GM10248 (cell line): ENCODE measurements at regions of chr15 and their contacts with region 1.

Region 1: DNA sequence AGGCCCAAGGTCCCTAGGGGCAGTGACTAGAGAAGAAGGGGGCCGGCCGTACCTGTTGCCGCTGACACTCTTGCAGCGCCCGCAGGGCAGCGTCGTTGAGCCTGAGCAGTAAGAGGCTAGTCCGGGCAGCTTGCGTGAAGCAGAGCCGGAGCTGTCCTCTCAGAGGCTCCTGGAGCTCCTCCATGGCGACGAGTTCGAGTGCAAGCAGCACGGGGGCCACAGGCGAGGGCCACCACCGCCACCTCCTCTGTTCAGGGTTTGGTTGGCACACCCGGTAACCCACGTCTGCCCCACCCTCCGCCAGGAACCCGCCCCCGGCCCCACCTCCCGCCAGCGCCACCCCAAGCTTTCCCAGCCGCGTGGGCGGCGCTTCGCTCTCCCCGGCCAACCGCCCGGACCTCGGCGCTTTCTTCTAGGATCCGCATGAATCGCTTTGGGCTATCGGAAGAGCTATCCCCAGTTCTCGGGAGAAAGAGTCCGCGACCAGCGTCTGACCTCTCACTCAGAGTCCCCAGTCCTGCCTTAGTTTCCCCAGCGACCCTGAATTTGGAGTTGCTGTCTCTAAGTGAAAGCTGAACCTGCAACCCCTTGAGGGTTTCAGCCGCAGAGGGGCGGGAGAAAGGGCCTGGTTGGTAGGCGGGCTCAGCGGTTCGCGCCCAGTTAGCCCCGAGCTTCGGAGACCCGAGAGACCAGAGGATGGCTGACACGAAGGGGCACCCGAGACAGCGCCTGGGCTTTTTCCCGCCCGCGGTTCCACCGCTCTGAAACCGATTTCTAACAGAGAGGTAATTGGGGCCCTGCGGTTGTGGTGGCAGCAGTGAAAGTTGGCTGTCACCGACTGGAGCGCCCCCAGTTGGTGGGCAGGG is at the start of gene ELL3:
- DNase-seq: peak; percentile 81
- CTCF ChIP-seq: peak; percentile 75

Region 2: DNA sequence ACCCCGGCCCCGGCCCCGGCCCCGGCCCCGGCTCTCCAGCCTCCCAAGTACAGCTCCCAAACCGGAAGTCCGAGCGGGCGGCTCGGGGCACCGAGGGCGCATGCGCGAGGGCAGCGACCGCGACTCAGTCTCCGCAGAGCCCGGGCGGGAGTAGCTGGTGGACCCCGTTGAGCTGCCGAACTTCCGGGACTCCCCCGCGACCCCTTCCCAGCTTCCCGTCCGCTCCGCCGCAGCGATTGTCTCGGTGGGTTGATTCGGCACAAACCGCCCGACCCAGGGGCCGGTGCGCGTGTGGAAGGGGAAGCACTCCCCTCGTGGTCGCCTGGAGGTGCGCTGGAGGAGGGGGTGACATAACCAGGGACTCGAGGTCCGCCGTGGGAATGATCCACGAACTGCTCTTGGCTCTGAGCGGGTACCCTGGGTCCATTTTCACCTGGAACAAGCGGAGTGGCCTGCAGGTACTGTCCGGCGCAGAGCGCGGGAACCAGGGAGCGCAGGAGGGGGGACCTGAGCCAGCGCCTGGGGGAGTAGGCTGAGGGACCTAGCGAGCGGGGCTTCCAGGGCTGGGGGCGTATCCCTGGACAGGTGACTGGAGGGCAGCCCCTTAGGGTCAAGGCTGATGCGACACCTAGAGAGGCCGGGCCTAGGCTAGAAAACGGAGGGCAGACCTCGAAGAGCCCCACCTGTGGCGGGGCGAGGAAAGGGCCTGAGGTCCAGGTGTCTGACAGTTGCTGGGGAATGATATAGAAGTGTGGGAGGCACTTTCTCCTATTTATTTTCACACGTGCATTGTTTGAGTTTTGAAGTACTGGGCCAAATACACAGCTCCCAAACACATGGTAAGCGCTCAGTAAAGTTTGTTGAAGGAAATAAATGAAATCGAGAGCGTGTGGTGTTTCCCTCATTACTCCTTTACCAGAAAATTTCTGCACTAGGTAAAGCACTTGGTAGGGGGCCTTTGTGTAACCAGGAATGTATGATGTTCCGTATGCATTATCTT is 405.7 kb before region 1 on chr15 and contains the starts of genes TUBGCP4 and ZSCAN29:
- CTCF ChIA-PET with region 1: no interaction called
- POLR2A ChIA-PET with region 1: no interaction called
- DNase-seq: peak; percentile 96
- CTCF ChIP-seq: peak; percentile 49

Region 3: GRCh38 chr15:43791993-43792760 is 15.2 kb after region 1 on chr15 and contains the start of gene SERF2:
- CTCF ChIA-PET with region 1: interaction called, 59 read pairs
- POLR2A ChIA-PET with region 1: interaction called, 14 read pairs
- DNase-seq: peak; percentile 98
- CTCF ChIP-seq: no peak

Region 4: GRCh38 chr15:43800286-43801141 is 23.6 kb after region 1 on chr15 and contains the start of gene HYPK:
- CTCF ChIA-PET with region 1: interaction called, 17 read pairs
- POLR2A ChIA-PET with region 1: interaction called, 15 read pairs
- DNase-seq: peak; percentile 88
- CTCF ChIP-seq: no peak